Right cardiac atrium (tissue), 5 donors: ENCODE measurements at regions of chr3 and their contacts with region 1.

Region 1: DNA sequence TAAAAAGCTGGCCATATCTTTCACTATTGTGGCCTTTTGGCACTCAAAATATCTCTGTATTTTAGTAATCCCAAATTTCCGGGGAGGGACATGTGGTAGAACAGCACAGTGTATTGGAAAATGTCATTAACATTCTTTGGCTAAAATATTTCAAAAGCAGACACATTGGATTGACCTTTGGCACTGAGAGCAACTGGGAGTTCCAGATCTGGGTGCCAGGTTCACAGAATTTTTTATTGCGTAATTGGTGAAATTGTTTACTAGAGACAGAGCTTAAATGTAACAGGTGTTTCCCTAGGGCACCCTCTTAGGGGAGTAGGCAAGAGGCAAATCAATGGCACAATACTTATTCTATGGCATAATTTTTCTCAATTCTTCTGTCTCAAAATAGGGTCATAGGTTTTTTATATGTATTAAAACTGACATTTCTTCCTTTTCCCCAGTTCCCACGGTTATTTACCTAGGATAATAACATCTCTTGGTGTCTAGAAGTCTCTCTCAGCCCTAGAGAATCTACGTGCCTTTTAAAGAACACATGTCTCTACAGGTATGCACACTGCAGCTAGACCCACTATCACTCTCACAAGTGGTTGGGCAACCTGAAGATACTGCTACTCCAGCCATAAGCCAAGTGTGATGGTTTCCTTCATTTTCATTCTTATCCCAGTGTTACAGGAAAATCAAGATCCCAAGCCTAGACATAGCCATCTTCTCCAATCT is 10.6 kb downstream of the RBMS3 start:
- DNase-seq: no peak
- ATAC-seq: peak; percentile 44 to 65
- H3K4me3 ChIP-seq: no peak overlapping the region
- H3K27ac ChIP-seq: no peak overlapping the region
- H3K4me1 ChIP-seq: peaks cover 8% of the 10 kb centered on the region
- H3K27me3 ChIP-seq: no peaks in the 10 kb centered on the region

Region 2: GRCh38 chr3:29255854-29256696 is 35.3 kb before region 1 on chr3:
- intact Hi-C with region 1: no loop called
- DNase-seq: no peak
- ATAC-seq: no peak
- H3K4me3 ChIP-seq: no peak overlapping the region
- H3K27ac ChIP-seq: no peak overlapping the region
- H3K4me1 ChIP-seq: no peaks in the 10 kb centered on the region
- H3K27me3 ChIP-seq: no peaks in the 10 kb centered on the region

Region 3: DNA sequence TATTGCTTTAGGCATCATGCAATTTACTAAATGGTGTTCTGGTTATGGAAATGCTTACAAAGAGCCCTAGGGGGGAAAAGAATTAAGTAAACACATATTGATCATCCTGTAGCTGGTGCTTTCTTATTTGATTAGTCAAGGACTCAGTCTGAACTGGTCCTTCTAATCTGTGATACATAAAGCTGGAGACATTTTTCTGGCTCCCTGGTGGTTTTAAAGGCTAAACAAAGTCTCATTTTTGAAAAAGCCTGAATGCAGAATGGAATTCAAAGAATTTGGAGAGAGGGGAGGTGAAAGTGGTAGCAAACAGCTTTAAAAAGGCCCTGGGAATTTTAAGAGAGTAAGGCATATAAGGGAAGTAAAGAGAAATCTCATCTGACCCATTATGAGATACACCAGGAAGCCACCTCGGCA is 139.1 kb after region 1 on chr3:
- intact Hi-C with region 1: loop called in 1 of 4 experiments (anchors 10 kb)
- DNase-seq: no peak
- ATAC-seq: no peak
- H3K4me3 ChIP-seq: no peak overlapping the region
- H3K27ac ChIP-seq: no peak overlapping the region
- H3K4me1 ChIP-seq: peaks cover 7% of the 10 kb centered on the region
- H3K27me3 ChIP-seq: no peaks in the 10 kb centered on the region